ENCODE measurements at regions of chr12 and their contacts with region 1.

Region 1: DNA sequence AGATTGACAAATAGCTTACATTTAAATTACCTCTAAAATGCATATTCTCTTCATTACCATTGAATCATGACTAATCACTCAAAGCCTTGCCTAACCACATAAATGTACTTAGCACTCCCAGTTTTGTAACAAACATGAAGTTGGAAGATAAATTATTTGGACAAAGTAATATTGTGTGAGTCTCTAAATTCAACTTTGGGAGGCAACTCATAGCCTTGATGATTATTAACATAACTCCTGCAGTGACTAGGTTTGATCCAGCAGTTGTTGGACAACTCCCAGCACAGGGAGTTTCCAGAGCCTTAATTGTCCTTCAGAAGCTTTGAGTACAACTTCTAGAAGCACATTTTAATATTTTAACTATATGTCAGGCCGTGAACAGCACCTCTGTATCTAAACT is 153.4 kb upstream of the PDZRN4 start:
- DNase-seq: no peak
- ATAC-seq: no peak
- H3K4me3 ChIP-seq: no peak overlapping the region
- H3K4me3 Mint-ChIP-seq: no peak overlapping the region
- H3K27ac ChIP-seq: no peak overlapping the region
- H3K27ac Mint-ChIP-seq: no peak overlapping the region
- H3K4me1 ChIP-seq: no peaks in the 10 kb centered on the region
- H3K4me1 Mint-ChIP-seq: no peaks in the 10 kb centered on the region
- H3K27me3 ChIP-seq: no peaks in the 10 kb centered on the region
- H3K27me3 Mint-ChIP-seq: no peaks in the 10 kb centered on the region
- CTCF ChIP-seq: no peak

Region 2: GRCh38 chr12:41046909-41047308 is 12.2 kb after region 1 on chr12:
- CTCF ChIA-PET with region 1: no interaction called
- POLR2A ChIA-PET with region 1: no interaction called
- intact Hi-C with region 1: loop called in 1 of 2 experiments (anchors 1 kb)
- DNase-seq: no peak
- ATAC-seq: no peak
- H3K4me3 ChIP-seq: no peak overlapping the region
- H3K4me3 Mint-ChIP-seq: no peak overlapping the region
- H3K27ac ChIP-seq: no peak overlapping the region
- H3K27ac Mint-ChIP-seq: no peak overlapping the region
- H3K4me1 ChIP-seq: no peaks in the 10 kb centered on the region
- H3K4me1 Mint-ChIP-seq: no peaks in the 10 kb centered on the region
- H3K27me3 ChIP-seq: no peaks in the 10 kb centered on the region
- H3K27me3 Mint-ChIP-seq: no peaks in the 10 kb centered on the region
- CTCF ChIP-seq: no peak